ENCODE measurements at regions of chr7 and their contacts with region 1.

Region 1: DNA sequence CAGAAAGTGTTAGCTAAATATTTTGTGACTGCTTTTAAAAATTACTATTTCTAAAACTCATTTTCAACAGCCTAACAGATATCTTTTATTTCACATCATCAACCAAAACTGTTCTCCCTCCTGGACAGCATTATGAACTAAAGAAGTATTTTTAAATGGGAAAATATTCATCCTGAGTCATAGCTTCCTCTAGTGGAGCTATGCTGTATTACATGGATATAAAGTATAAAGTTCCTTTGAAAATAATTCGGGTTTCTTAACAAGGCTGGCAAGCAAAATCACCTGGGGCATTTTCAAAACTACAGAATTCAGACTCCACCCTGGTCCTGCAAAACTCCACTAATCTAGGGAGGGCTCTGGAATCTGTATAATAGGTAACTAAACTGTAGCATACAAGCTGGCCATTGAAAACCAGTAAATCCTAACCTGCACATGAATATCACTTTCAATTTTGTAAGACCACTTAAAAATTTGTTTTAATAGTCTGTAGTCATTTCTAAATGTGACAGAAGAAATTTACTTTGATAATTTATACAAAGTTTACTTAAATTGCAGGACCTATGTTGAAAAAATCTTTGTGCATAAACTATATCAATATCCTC is 53.5 kb downstream of the SCIN start:
- DNase-seq: no peak
- H3K4me3 ChIP-seq: no peak overlapping the region
- H3K27ac ChIP-seq: no peak overlapping the region
- H3K4me1 ChIP-seq: no peaks in the 10 kb centered on the region
- H3K27me3 ChIP-seq: no peaks in the 10 kb centered on the region
- CTCF ChIP-seq: peak; percentile 16 to 83 (median 68)
- POLR2A ChIP-seq: no peak

Region 2: DNA sequence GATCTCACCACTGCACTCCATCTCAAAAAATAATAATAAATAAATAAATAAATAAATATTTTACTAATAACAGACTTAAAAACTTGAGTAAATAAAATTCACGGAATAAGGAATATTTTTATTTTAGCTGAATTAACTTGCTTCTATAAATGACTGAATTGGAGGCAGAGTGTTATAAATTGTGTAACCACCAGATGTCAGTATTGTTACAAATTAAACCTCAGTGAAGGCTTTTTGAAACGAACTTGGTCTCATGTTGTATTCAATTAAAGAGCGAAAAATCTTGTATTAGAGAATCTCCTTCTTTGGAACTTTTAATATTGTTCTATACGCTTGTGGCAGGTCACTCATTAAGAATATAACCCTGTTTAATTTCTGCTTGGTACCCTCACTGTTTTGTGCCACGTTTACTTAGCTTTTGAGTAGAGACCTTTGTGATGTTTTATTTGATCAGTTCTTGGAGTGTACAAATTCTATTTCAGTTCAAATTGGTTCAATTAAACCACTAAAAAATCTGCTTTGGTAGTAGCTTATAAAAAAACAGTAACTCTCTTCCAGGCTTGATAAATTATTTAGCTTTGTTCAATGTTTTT is 99.1 kb before region 1 on chr7:
- intact Hi-C with region 1: loop called (anchors 5 kb)
- DNase-seq: no peak
- H3K4me3 ChIP-seq: no peak overlapping the region
- H3K27ac ChIP-seq: no peak overlapping the region
- H3K4me1 ChIP-seq: no peaks in the 10 kb centered on the region
- H3K27me3 ChIP-seq: no peaks in the 10 kb centered on the region
- CTCF ChIP-seq: peak; percentile 9 to 80 (median 68)
- POLR2A ChIP-seq: no peak

Measured in prostate gland (tissue), 2 donors.